WTC11 (cell line): ENCODE measurements at regions of chr15 and their contacts with region 1.

Region 1: DNA sequence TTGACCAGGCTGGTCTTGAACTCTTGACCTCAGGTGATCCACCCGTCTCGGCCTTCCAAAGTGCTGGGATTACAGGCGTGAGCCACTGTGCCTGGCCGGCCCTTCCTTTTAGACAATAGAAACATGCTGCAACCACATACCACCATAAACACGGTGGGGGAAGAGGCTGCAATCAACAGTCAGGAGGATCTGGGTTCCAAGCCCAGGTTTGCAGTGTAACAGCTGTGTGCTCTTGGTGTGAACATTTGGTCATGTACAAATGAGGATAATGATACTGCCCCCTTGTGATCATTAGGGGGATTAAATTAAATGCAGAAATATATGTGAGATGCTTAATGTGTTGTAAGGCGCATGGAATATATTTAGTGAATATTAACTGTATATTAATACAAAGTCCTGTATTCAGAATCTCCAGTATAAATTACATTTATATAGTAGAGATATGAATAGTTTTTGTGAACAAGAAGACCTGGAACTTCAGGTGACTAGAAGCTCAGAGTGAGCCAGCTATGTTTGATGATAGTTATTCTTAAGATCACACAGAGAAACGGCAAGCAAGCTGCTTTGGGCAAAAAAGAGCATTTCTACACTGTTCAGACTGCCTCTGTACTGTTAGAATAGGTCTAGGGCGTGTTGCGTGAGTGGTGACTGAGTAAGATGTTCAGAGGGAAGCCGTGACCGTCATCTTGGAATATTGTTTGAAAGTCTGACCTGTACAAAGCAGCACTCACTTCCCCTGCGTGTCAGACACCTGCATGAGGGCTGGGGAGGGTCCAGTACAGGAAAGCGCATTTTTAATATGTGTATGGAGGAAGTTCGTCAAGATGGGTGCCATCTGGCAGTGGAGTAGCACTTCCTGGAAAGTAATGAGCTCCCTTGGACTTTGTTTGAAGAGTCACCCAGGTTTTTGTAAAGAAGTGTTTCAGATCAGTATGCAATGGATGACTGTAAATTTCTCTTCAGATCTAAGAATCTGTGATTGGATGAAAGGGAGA is 125.8 kb downstream of the PGPEP1L start:
- DNase-seq: no peak
- ATAC-seq: peak; percentile 67
- H3K4me3 Mint-ChIP-seq: no peak overlapping the region
- H3K27ac Mint-ChIP-seq: peak overlapping the region; percentile 48
- H3K4me1 Mint-ChIP-seq: peaks cover 63% of the 10 kb centered on the region
- H3K27me3 Mint-ChIP-seq: no peaks in the 10 kb centered on the region
- CTCF ChIP-seq: peak; percentile 51

Region 2: GRCh38 chr15:98840053-98840452 is 41.8 kb before region 1 on chr15:
- CTCF ChIA-PET with region 1: no interaction called
- POLR2A ChIA-PET with region 1: no interaction called
- DNase-seq: no peak
- ATAC-seq: no peak
- H3K4me3 Mint-ChIP-seq: no peak overlapping the region
- H3K27ac Mint-ChIP-seq: peak overlapping the region; percentile 54; the same call in 1 of the 2 replicates
- H3K4me1 Mint-ChIP-seq: peaks cover 51% of the 10 kb centered on the region
- H3K27me3 Mint-ChIP-seq: no peaks in the 10 kb centered on the region
- CTCF ChIP-seq: no peak

Region 3: DNA sequence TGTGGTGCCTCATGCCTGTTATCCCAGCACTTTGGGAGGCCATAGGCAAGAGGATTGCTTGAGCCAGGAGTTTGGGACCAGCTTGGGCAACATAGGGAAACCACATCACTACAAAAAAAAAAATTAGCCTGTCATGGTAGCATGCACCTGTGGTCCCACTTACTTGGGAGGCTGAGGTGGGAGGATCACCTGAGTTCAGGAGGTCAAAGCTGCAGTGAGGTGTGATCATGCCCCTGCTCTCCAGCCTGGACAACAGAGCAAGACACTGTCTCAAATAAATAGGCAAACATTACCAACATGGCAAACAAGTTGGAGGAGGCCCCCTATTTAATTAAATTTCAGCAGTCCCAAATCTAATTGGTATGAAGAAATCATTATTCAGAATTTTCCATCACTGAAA is 17.8 kb before region 1 on chr15:
- CTCF ChIA-PET with region 1: interaction called, 10 read pairs
- POLR2A ChIA-PET with region 1: no interaction called
- DNase-seq: no peak
- ATAC-seq: no peak
- H3K4me3 Mint-ChIP-seq: no peak overlapping the region
- H3K27ac Mint-ChIP-seq: no peak overlapping the region
- H3K4me1 Mint-ChIP-seq: peaks cover 81% of the 10 kb centered on the region
- H3K27me3 Mint-ChIP-seq: no peaks in the 10 kb centered on the region
- CTCF ChIP-seq: no peak

Region 4: DNA sequence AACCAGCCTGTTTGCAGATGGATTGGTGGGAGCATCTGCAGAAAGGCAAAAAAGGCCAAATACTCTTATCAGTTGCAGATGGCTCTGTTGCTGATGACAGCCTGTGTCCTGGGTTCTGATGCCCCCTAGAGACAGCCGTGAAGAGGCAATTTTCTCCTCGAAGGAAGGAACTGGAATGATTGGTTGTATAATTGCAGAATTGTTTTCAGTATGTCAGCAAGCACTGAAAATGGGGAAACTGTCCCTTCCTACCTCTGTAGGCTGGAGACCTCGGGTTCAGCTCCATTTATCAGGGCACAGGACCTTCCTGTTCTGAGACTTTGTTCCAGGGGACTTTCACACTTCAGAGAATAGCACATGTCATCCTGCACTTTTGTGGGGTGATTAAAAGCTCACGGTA is 22.7 kb after region 1 on chr15:
- CTCF ChIA-PET with region 1: interaction called, 12 read pairs
- POLR2A ChIA-PET with region 1: no interaction called
- DNase-seq: peak; percentile 29
- ATAC-seq: peak; percentile 71
- H3K4me3 Mint-ChIP-seq: no peak overlapping the region
- H3K27ac Mint-ChIP-seq: no peak overlapping the region
- H3K4me1 Mint-ChIP-seq: peaks cover 43% of the 10 kb centered on the region
- H3K27me3 Mint-ChIP-seq: no peaks in the 10 kb centered on the region
- CTCF ChIP-seq: 0 out of 2 replicates have a peak, but pooled peaks have one; percentile 22

Region 5: GRCh38 chr15:98978153-98978552 is 96.3 kb after region 1 on chr15:
- CTCF ChIA-PET with region 1: no interaction called
- POLR2A ChIA-PET with region 1: no interaction called
- DNase-seq: no peak
- ATAC-seq: no peak
- H3K4me3 Mint-ChIP-seq: no peak overlapping the region
- H3K27ac Mint-ChIP-seq: no peak overlapping the region
- H3K4me1 Mint-ChIP-seq: no peaks in the 10 kb centered on the region
- H3K27me3 Mint-ChIP-seq: no peaks in the 10 kb centered on the region
- CTCF ChIP-seq: no peak

Region 6: DNA sequence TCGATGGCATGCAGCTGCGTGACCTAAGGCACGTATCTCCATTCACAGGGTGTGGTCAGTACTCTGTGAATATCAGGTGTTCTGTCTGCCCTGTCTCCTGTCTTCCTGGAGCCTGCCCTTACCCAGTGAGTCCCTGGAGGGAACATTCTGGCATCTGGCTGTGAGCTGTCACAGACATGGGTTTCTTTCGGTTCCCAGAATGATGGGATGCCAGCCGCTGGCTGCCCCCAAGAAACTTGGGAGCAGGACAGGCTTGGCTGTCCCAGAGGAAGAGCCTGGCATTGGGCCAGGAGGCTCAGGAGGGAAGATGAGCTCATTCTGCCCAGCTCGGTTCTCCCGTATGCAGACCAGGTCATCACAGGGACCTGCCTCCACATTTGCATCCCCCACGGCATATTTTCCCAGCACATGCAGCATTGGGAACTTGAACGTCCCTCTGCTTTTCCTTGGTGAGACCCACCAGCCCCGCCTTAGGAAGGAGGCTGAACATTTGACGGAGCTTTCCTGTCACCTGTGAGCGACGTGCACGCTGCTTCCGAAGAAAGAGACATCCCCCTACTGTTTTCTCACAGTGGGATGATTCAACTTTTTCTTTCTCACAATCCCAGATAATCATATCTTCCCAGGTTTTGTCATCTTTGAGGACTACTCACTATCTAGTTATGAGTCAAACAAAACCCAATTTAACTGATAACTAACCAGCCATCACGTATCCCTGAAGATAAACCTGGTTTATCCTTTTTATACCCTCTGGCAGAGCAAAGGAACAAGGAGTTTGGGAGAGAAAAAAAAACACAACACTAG is 147.7 kb after region 1 on chr15:
- CTCF ChIA-PET with region 1: no interaction called
- POLR2A ChIA-PET with region 1: no interaction called
- DNase-seq: no peak
- ATAC-seq: no peak
- H3K4me3 Mint-ChIP-seq: no peak overlapping the region
- H3K27ac Mint-ChIP-seq: no peak overlapping the region
- H3K4me1 Mint-ChIP-seq: peaks cover 11% of the 10 kb centered on the region; the same call in 1 of the 2 replicates
- H3K27me3 Mint-ChIP-seq: no peaks in the 10 kb centered on the region
- CTCF ChIP-seq: no peak